ENCODE measurements at regions of chr16 and their contacts with region 1.

Region 1: DNA sequence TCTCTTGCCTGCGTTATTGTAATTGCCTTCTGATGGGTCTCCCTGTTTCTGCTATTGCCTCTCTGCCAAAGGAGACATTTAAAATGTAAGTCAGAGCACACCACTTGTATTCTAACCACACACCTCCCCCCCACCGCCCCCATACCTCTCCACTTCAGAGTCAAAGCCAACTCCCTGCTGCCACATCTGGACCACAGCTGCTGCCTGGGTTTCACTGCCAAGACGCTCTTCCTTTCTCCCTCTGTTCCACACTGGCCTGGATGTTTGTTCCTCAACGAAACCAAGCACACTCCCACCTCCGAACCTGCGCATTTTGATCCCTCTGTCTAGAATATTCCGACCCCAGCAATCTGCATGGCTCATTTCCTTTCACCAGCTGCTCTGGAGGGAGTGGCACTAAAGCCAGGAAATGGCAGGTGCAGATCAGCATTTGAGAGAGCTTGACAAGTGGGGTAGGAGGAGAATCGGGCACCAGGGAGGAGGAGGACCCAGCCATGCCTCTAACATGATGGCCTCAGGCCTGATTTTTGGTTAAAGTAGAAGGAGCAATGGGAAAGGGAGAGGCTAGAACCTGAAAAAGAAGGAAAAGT is 92.4 kb upstream of the HS3ST2 start:
- DNase-seq: no peak
- ATAC-seq: no peak
- H3K4me3 ChIP-seq: no peak overlapping the region
- H3K27ac ChIP-seq: no peak overlapping the region
- H3K4me1 ChIP-seq: no peaks in the 10 kb centered on the region
- H3K27me3 ChIP-seq: no peaks in the 10 kb centered on the region
- CTCF ChIP-seq: no peak

Region 2: GRCh38 chr16:22739077-22739476 is 17.5 kb after region 1 on chr16:
- CTCF ChIA-PET with region 1: no interaction called
- POLR2A ChIA-PET with region 1: no interaction called
- intact Hi-C with region 1: no loop called
- DNase-seq: no peak
- ATAC-seq: no peak
- H3K4me3 ChIP-seq: no peak overlapping the region
- H3K27ac ChIP-seq: no peak overlapping the region
- H3K4me1 ChIP-seq: no peaks in the 10 kb centered on the region
- H3K27me3 ChIP-seq: no peaks in the 10 kb centered on the region
- CTCF ChIP-seq: no peak

Region 3: GRCh38 chr16:22787466-22788189 is 66.0 kb after region 1 on chr16:
- CTCF ChIA-PET with region 1: no interaction called
- POLR2A ChIA-PET with region 1: interaction called, 4 read pairs
- intact Hi-C with region 1: loop called (anchors 2 kb)
- DNase-seq: peak; percentile 87
- ATAC-seq: peak; percentile 88
- H3K4me3 ChIP-seq: no peak overlapping the region
- H3K27ac ChIP-seq: peak overlapping the region; percentile 65
- H3K4me1 ChIP-seq: peaks cover 32% of the 10 kb centered on the region
- H3K27me3 ChIP-seq: no peaks in the 10 kb centered on the region
- CTCF ChIP-seq: no peak

Measured in PC-3 (cell line).